ENCODE measurements at regions of chr6 and their contacts with region 1.

Region 1: GRCh38 chr6:106097411-106098231 is 11.5 kb downstream of the PRDM1 start:
- DNase-seq: peak; percentile 61
- H3K4me3 Mint-ChIP-seq: peak overlapping the region; percentile 95
- H3K27ac Mint-ChIP-seq: peak overlapping the region; percentile 98
- H3K4me1 Mint-ChIP-seq: peaks cover 69% of the 10 kb centered on the region
- H3K27me3 Mint-ChIP-seq: no peaks in the 10 kb centered on the region

Region 2: GRCh38 chr6:105746509-105746908 is 351.1 kb before region 1 on chr6:
- intact Hi-C with region 1: loop called (anchors 2 kb)
- DNase-seq: no peak
- H3K4me3 Mint-ChIP-seq: no peak overlapping the region
- H3K27ac Mint-ChIP-seq: peak overlapping the region; percentile 47
- H3K4me1 Mint-ChIP-seq: peaks cover 59% of the 10 kb centered on the region
- H3K27me3 Mint-ChIP-seq: no peaks in the 10 kb centered on the region

Region 3: DNA sequence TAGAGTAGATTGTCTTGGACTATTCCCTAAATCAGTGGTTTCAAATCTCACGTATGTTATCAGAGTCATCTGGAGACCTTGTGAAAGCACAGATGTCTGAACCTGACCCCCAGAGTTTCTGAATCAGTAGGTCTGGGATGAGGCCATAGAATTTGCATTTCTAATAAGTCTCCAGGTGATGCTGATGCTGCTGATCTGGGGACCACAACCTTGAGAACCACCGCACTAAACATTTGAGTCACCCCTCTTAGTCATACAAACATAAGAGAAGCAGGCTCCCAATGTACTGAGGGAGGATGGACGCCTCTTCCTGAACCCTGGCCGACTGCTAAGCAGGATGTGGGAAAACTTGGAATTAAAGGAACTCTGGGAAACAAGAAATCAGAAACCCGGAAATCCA is 199.3 kb before region 1 on chr6:
- intact Hi-C with region 1: loop called (anchors 1 kb)
- DNase-seq: no peak
- H3K4me3 Mint-ChIP-seq: no peak overlapping the region
- H3K27ac Mint-ChIP-seq: no peak overlapping the region
- H3K4me1 Mint-ChIP-seq: peaks cover 30% of the 10 kb centered on the region
- H3K27me3 Mint-ChIP-seq: no peaks in the 10 kb centered on the region

Region 4: GRCh38 chr6:106085984-106086813 is 11.4 kb before region 1 on chr6 and contains the start of gene PRDM1:
- intact Hi-C with region 1: loop called (anchors 1 kb)
- DNase-seq: peak; percentile 78
- H3K4me3 Mint-ChIP-seq: peak within 1 kb of the TSS; percentile 89
- H3K27ac Mint-ChIP-seq: peak within 1 kb of the TSS; percentile 64
- H3K4me1 Mint-ChIP-seq: peaks cover 76% of the 10 kb centered on the region
- H3K27me3 Mint-ChIP-seq: peaks cover 5% of the 10 kb centered on the region
- total RNA-seq, gene PRDM1: 49.1 and 52.3 TPM in 2 replicates

Region 5: DNA sequence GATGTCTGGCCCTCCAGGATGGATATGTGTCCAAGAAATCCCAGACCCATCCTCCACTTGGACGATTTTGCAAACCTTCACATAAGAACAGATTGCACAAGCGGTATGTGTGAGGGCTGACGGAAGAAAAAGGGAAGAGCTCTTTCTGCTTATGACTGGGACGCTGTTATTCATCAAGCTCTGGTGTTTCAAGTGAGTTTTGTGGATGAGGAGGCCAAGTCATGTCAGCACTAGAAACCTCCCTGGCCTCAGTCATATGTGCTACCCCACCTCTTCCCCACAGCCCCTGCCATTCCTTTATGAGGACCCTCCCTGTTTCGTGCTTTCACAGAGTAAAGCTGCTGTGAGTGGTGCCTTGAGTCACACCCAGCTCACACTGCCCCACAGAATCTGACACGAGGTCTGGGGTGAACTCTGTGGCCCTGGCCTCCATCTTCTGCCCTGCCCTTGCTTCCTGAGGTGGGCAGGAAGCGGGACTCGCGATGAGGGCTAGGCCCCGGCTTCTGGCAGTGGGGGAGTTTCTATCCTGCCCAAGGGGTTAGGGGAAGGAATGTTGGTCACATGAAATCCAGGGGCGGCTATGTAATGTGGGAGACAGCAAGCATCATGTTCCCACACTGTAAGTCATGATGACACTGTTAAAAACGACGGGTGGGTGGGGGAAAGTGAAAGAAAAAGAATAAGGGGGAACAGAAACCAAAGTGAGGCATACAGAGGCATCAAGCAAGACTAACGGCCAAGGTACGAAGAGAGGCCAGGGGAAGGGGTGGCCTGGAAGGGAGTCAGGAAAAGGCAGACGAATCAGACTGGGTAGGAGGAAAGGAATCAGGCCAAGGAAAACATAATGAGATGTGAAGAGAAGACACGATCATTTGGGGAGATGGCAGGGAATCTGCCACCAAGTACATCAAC is 66.6 kb after region 1 on chr6:
- intact Hi-C with region 1: loop called (anchors 1 kb)
- DNase-seq: peak; percentile 57
- H3K4me3 Mint-ChIP-seq: peak overlapping the region; percentile 74
- H3K27ac Mint-ChIP-seq: peak overlapping the region; percentile 93
- H3K4me1 Mint-ChIP-seq: peaks cover 56% of the 10 kb centered on the region
- H3K27me3 Mint-ChIP-seq: no peaks in the 10 kb centered on the region

Region 6: DNA sequence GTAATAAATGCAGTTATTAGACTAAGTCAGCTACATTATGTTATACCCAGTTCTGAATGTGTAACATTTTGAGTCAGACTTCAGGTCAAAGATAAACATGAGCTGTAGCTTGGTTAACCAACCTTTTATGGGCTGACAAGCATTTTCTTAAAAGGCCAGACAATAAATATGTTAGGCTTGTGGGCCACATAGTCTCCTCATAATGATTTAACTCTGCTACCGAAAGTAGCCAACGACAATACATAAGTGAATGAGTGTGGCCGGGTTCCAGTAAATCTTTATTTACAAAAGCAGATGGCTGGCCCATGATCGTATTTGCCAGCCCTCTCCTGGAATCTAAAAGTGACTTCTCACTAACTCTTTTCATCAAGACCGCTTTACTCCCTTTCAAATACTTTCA is 178.1 kb after region 1 on chr6:
- intact Hi-C with region 1: loop called (anchors 5 kb)
- DNase-seq: no peak
- H3K4me3 Mint-ChIP-seq: no peak overlapping the region
- H3K27ac Mint-ChIP-seq: peak overlapping the region; percentile 12
- H3K4me1 Mint-ChIP-seq: peaks cover 27% of the 10 kb centered on the region
- H3K27me3 Mint-ChIP-seq: no peaks in the 10 kb centered on the region